ENCODE measurements at regions of chr20 and their contacts with region 1.

Region 1: GRCh38 chr20:21505161-21505809 is 8.6 kb downstream of the NKX2-2 start:
- DNase-seq: peak in 1 of 2 donors; percentile 41
- H3K4me3 ChIP-seq: no peak overlapping the region
- H3K27ac ChIP-seq: no peak overlapping the region
- H3K4me1 ChIP-seq: peaks cover 0 to 16% of the 10 kb centered on the region in 2 donors
- H3K27me3 ChIP-seq: peaks cover 10 to 34% of the 10 kb centered on the region in 2 donors
- CTCF ChIP-seq: peak; percentile 82 to 94 (median 88)
- POLR2A ChIP-seq: no peak

Region 2: DNA sequence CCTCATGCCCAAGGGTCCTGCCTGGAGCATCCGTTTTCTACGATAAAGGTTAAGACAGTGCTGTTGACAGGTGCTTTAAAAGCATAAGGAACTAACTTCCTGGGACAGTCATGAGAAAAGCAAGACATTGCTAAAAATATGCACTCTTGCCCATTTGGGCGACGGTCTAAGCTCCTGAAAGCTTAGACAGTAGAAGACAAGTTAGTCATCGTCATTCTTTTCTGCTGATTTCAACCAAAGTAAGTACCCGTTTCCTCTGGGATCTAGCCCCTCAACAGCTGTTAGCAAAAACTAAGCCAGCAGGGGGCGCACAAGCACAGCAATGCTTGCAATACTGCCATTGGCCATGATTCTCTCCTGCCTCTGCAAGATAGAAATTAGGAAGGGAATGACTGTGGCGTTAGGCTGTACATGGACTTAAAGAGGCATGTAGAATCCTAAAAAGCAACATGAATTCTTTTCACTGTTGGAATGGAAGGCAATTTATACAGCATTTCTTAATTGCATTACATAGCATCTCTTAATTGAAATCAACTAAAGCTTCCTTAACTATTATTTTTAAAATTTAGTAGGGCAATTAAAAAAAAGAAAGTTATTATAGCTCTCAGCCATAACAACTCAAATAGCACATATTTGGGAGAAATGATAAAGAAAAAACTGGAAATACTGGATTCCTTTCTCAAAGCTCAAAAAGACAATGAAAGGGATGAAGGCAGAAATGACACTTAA is 645.0 kb before region 1 on chr20:
- intact Hi-C with region 1: loop called (anchors 10 kb)
- DNase-seq: peak; percentile 74 to 75
- H3K4me3 ChIP-seq: no peak overlapping the region
- H3K27ac ChIP-seq: no peak overlapping the region
- H3K4me1 ChIP-seq: no peaks in the 10 kb centered on the region
- H3K27me3 ChIP-seq: no peaks in the 10 kb centered on the region
- CTCF ChIP-seq: peak; percentile 70 to 83 (median 79)
- POLR2A ChIP-seq: no peak

Region 3: GRCh38 chr20:21189761-21190523 is 315.3 kb before region 1 on chr20:
- intact Hi-C with region 1: no loop called
- DNase-seq: no peak
- H3K4me3 ChIP-seq: no peak overlapping the region
- H3K27ac ChIP-seq: peak overlapping the region in 1 of 2 donors; percentile 64
- H3K4me1 ChIP-seq: no peaks in the 10 kb centered on the region
- H3K27me3 ChIP-seq: no peaks in the 10 kb centered on the region
- CTCF ChIP-seq: no peak
- POLR2A ChIP-seq: no peak

Region 4: GRCh38 chr20:21235484-21236445 is 269.5 kb before region 1 on chr20:
- intact Hi-C with region 1: loop called (anchors 5 kb)
- DNase-seq: peak; percentile 30 to 43
- H3K4me3 ChIP-seq: no peak overlapping the region
- H3K27ac ChIP-seq: no peak overlapping the region
- H3K4me1 ChIP-seq: no peaks in the 10 kb centered on the region
- H3K27me3 ChIP-seq: no peaks in the 10 kb centered on the region
- CTCF ChIP-seq: peak; percentile 45 to 74 (median 60)
- POLR2A ChIP-seq: no peak